GM10248 (cell line): ENCODE measurements at regions of chr1 and their contacts with region 1.

Region 1: GRCh38 chr1:161098210-161099068 is at the start of gene KLHDC9:
- DNase-seq: peak; percentile 95
- CTCF ChIP-seq: peak; percentile 16

Region 2: GRCh38 chr1:160997323-160998038 is 101.0 kb before region 1 on chr1:
- CTCF ChIA-PET with region 1: interaction called, 46 read pairs
- POLR2A ChIA-PET with region 1: interaction called, 3 read pairs
- DNase-seq: peak; percentile 66
- CTCF ChIP-seq: peak; percentile 81

Region 3: GRCh38 chr1:161038523-161039153 is 59.8 kb before region 1 on chr1 and contains the start of gene TSTD1:
- CTCF ChIA-PET with region 1: interaction called, 49 read pairs
- POLR2A ChIA-PET with region 1: interaction called, 3 read pairs
- DNase-seq: peak; percentile 92
- CTCF ChIP-seq: no peak

Region 4: GRCh38 chr1:161045750-161046571 is 52.5 kb before region 1 on chr1 and contains the start of gene USF1:
- CTCF ChIA-PET with region 1: interaction called, 49 read pairs
- POLR2A ChIA-PET with region 1: no interaction called
- DNase-seq: peak; percentile 89
- CTCF ChIP-seq: no peak

Region 5: GRCh38 chr1:161082991-161083742 is 15.3 kb before region 1 on chr1:
- CTCF ChIA-PET with region 1: interaction called, 91 read pairs
- POLR2A ChIA-PET with region 1: no interaction called
- DNase-seq: no peak
- CTCF ChIP-seq: no peak

Region 6: GRCh38 chr1:161117759-161118581 is 19.5 kb after region 1 on chr1 and contains the starts of genes NIT1 and PFDN2:
- CTCF ChIA-PET with region 1: interaction called, 20 read pairs
- POLR2A ChIA-PET with region 1: interaction called, 3 read pairs
- DNase-seq: peak; percentile 93
- CTCF ChIP-seq: peak; percentile 0

Region 7: DNA sequence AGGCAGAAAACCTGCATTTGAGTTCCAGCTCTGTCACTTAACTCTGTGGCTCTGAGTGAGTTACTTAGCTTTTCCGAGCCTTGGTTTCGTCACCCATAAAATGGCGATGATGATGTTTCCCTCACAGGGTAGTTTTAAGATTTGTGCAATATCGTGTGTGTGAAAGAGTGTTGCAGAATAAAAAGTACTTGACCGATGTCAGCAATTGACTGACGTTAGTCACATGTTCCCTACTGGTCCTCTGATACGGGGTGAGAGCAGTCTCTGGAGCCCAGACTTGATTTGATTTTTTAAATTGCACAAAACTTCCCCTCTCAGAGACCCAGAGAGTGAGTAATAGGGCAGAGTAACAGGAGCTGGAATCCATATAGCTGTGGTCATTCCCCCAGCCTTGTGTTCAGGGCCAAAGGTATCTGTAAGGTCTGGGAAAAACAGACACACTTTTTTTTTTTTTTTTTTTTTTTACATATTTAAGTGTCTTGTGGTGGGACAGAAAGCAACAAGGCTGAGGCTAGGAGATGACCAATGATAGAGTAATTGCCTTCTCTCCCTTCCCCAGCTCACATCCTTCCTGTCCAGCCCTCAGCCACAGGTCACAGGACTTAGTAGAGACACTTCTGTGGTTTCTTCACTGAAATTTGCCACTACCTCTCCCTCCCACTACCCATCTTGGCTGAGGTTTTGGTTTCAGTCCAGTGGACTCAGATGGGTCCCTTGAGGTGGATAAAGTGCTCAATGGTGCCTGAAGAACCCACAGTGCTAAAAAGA is 118.7 kb after region 1 on chr1:
- CTCF ChIA-PET with region 1: no interaction called
- POLR2A ChIA-PET with region 1: no interaction called
- DNase-seq: peak; percentile 63
- CTCF ChIP-seq: no peak